IMR-90 (cell line): ENCODE measurements at regions of chr12 and their contacts with region 1.

Region 1: GRCh38 chr12:11648831-11649702 is at the start of gene ETV6:
- DNase-seq: peak; percentile 93
- ATAC-seq: peak; percentile 45
- H3K4me3 ChIP-seq: peak within 1 kb of the TSS; percentile 98
- H3K27ac ChIP-seq: peak within 1 kb of the TSS; percentile 99
- H3K4me1 ChIP-seq: peaks cover 6% of the 10 kb centered on the region
- H3K27me3 ChIP-seq: no peaks in the 10 kb centered on the region
- CTCF ChIP-seq: no peak
- POLR2A ChIP-seq: peak; percentile 64
- RAD21 ChIP-seq: peak; percentile 16; the same call in 1 of the 2 replicates
- total RNA-seq, gene ETV6: 9.4 and 9.9 TPM in 2 replicates

Region 2: GRCh38 chr12:11162502-11162901 is 486.6 kb before region 1 on chr12:
- CTCF ChIA-PET with region 1: no interaction called
- POLR2A ChIA-PET with region 1: no interaction called
- dilution Hi-C with region 1: no loop called
- in situ Hi-C with region 1: no loop called
- intact Hi-C with region 1: no loop called
- DNase-seq: no peak
- ATAC-seq: no peak
- H3K4me3 ChIP-seq: no peak overlapping the region
- H3K27ac ChIP-seq: no peak overlapping the region
- H3K4me1 ChIP-seq: no peaks in the 10 kb centered on the region
- H3K27me3 ChIP-seq: no peaks in the 10 kb centered on the region
- CTCF ChIP-seq: no peak
- POLR2A ChIP-seq: no peak
- RAD21 ChIP-seq: no peak

Region 3: DNA sequence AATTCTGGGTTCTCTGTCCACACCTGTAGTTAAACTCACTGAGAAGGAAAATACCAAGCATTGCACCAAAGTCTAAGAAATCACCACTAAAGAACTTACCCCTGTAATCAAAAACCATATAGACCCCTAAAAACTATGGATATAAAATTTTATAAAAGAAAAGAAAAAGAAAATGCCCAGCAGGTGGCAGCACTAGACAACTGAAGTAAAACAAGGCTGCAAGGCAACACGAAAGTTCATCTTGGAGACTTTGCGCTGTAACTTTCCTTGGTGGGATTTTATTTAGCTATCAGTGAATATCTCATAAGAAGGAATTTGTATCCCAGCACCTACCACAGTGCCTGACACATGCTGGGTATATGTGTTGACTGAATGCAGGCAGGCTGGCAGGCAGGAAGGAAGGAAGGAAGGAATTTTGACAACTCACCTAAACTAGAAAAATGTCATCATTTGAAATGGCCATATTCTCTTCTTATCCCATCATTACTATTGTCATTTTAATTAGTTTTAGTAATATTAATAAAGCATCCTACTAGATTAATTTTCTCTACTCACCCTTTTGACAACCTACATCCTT is 67.8 kb before region 1 on chr12:
- CTCF ChIA-PET with region 1: no interaction called
- POLR2A ChIA-PET with region 1: interaction called, 3 read pairs
- dilution Hi-C with region 1: no loop called
- in situ Hi-C with region 1: no loop called
- intact Hi-C with region 1: loop called (anchors 1 kb)
- DNase-seq: peak; percentile 78
- ATAC-seq: 0 out of 2 replicates have a peak, but pooled peaks have one; percentile 19
- H3K4me3 ChIP-seq: no peak overlapping the region
- H3K27ac ChIP-seq: no peak overlapping the region
- H3K4me1 ChIP-seq: peaks cover 7% of the 10 kb centered on the region
- H3K27me3 ChIP-seq: peaks cover 5% of the 10 kb centered on the region
- CTCF ChIP-seq: peak; percentile 63
- POLR2A ChIP-seq: no peak
- RAD21 ChIP-seq: peak; percentile 87

Region 4: DNA sequence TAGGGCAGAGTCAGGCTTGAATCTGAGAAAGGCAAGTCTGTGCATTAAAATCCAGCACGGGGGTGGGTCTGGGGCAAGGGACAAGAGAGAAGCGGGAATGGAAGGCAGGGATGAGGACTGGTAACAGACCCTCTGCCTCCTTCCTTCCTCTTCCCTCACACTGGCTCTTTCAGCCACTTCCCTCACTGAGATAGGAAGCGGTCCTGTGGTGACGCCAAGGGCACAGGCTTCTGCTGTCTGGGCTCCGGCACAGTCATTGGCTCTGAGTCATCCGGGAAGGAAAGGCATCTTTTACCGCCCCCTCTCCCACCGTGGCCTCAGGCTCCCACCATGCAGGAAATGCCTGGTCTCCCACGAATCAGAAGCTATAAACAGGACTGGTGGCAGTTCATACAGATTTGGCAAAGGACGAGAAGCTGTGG is 70.6 kb after region 1 on chr12:
- CTCF ChIA-PET with region 1: no interaction called
- POLR2A ChIA-PET with region 1: no interaction called
- dilution Hi-C with region 1: no loop called
- in situ Hi-C with region 1: no loop called
- intact Hi-C with region 1: loop called (anchors 2 kb)
- DNase-seq: peak; percentile 98
- ATAC-seq: peak; percentile 91
- H3K4me3 ChIP-seq: no peak overlapping the region
- H3K27ac ChIP-seq: peak overlapping the region; percentile 96
- H3K4me1 ChIP-seq: peaks cover 32% of the 10 kb centered on the region
- H3K27me3 ChIP-seq: no peaks in the 10 kb centered on the region
- CTCF ChIP-seq: no peak
- POLR2A ChIP-seq: peak; percentile 87
- RAD21 ChIP-seq: peak; percentile 27

Region 5: DNA sequence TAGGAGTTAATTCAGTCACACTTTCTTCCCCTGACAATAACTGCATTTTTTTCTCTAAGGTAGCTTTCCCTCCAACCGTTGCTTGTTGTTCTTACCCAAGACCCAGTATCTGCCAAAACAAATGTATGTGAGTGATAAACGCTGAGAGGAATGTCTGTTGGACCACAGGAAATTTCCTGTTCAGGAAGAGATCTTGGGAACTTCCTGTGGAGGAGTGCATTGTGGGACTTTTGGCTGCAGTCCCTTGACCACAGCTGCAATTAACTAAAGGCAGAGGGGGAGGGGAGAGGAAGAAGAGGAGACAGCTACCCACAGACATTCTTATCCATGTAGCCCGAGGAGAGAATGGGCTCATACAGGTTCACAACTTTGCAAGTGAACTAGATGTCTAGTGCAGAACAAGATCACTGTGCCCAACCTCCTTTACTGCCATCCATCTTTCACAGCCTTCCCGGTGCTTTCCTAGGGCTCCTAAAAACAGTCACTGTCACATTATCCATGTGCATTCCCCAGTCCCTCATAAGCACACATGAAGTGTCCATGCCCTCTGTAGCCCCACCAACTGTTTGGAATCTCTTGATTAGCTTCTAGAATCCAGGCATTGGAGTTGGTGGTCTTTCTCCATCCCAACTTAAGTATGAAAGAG is 149.9 kb after region 1 on chr12:
- CTCF ChIA-PET with region 1: no interaction called
- POLR2A ChIA-PET with region 1: interaction called, 3 read pairs
- dilution Hi-C with region 1: no loop called
- in situ Hi-C with region 1: no loop called
- intact Hi-C with region 1: loop called (anchors 1 kb)
- DNase-seq: peak; percentile 88
- ATAC-seq: no peak
- H3K4me3 ChIP-seq: no peak overlapping the region
- H3K27ac ChIP-seq: peak overlapping the region; percentile 96
- H3K4me1 ChIP-seq: peaks cover 33% of the 10 kb centered on the region
- H3K27me3 ChIP-seq: no peaks in the 10 kb centered on the region
- CTCF ChIP-seq: no peak
- POLR2A ChIP-seq: no peak
- RAD21 ChIP-seq: no peak

Region 6: DNA sequence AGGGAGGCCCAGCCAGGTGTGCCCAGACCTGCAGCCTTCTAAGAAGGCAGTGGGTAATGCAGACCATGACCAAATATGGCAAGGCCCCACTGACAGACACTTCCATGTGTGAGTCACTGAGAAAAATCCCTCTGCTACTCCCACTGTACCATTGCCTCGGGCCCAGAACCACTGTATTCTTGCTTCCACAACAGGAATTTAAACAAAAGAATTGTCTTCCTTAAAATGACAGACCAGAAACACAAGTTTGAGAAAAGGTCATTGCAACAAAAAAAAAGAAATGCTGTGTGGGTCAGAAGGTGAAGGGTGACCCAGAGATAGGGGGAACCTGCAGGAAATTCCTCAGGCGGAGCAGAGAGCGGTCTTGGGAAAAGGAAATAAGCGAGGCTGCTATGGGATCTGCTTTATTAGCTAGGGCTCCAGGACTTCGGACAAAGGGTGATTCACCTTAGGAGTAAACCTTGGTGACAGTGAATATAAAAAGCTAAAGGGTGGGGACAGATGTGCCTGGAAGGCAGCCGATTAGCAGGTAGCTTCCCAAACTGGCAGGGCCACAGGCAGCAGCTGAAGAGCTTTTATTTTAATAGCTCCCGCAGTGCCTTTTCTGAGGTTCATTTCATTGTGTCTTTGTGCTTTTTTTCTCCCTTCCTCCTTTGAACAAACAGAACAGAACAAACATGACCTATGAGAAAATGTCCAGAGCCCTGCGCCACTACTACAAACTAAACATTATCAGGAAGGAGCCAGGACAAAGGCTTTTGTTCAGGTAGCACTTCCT is 236.4 kb after region 1 on chr12:
- CTCF ChIA-PET with region 1: no interaction called
- POLR2A ChIA-PET with region 1: no interaction called
- dilution Hi-C with region 1: no loop called
- in situ Hi-C with region 1: no loop called
- intact Hi-C with region 1: loop called (anchors 2 kb)
- DNase-seq: peak; percentile 76
- ATAC-seq: peak; percentile 99
- H3K4me3 ChIP-seq: no peak overlapping the region
- H3K27ac ChIP-seq: peak overlapping the region; percentile 71
- H3K4me1 ChIP-seq: peaks cover 6% of the 10 kb centered on the region
- H3K27me3 ChIP-seq: no peaks in the 10 kb centered on the region
- CTCF ChIP-seq: no peak
- POLR2A ChIP-seq: no peak
- RAD21 ChIP-seq: no peak

Region 7: GRCh38 chr12:12334367-12335040 is 685.4 kb after region 1 on chr12:
- CTCF ChIA-PET with region 1: no interaction called
- POLR2A ChIA-PET with region 1: no interaction called
- dilution Hi-C with region 1: no loop called
- in situ Hi-C with region 1: no loop called
- intact Hi-C with region 1: loop called (anchors 10 kb)
- DNase-seq: peak; percentile 46
- ATAC-seq: peak; percentile 30; the same call in 1 of the 2 replicates
- H3K4me3 ChIP-seq: no peak overlapping the region
- H3K27ac ChIP-seq: no peak overlapping the region
- H3K4me1 ChIP-seq: peaks cover 2% of the 10 kb centered on the region; the same call in 1 of the 2 replicates
- H3K27me3 ChIP-seq: 0 out of 2 replicates have a peak, but pooled peaks cover 2% of the 10 kb centered on the region
- CTCF ChIP-seq: peak; percentile 74
- POLR2A ChIP-seq: no peak
- RAD21 ChIP-seq: peak; percentile 60